Activated CD4-positive, alpha-beta memory T cell treated with anti-CD3 and anti-CD28 coated beads for 36 hours (primary cell): ENCODE measurements at regions of chr4 and their contacts with region 1.

Region 1: GRCh38 chr4:7761720-7762119 is 177.9 kb downstream of the AFAP1 start:
- DNase-seq: peak; percentile 66
- H3K4me3 Mint-ChIP-seq: no peak overlapping the region
- H3K27ac Mint-ChIP-seq: peak overlapping the region; percentile 69
- H3K4me1 Mint-ChIP-seq: peaks cover 30% of the 10 kb centered on the region
- H3K27me3 Mint-ChIP-seq: no peaks in the 10 kb centered on the region

Region 2: DNA sequence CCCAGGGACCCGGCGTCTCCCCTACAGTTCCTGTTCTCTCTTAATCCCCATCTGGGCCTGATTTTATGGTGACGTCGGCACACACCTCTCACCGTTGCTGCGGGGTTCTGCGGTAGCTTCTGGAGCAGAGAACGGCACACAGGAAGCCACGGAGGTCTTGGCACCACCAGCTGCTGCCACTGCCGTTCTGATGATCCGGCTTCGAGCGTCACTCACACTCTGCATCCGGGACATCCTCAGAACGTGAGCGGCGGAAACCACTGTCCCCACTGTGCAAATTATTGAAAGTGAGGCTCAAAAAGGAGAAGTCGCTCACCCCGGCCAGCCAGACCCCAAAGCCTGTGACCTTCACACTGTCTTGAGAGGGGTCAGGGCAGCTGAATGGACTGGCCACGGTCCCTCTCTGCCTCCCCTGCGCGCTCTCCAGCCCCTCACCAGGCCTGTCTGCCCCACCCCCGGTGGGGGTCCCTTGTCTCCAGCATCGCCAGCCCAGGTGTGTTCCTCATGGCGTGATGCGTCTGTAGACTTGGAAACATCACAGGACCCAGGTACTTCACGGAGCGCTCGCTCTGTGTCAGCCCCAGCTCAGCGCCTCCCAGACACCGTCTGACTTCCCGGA is 23.2 kb before region 1 on chr4:
- CTCF ChIA-PET with region 1: no interaction called
- POLR2A ChIA-PET with region 1: no interaction called
- intact Hi-C with region 1: no loop called
- DNase-seq: no peak
- H3K4me3 Mint-ChIP-seq: no peak overlapping the region
- H3K27ac Mint-ChIP-seq: no peak overlapping the region
- H3K4me1 Mint-ChIP-seq: no peaks in the 10 kb centered on the region
- H3K27me3 Mint-ChIP-seq: no peaks in the 10 kb centered on the region

Region 3: DNA sequence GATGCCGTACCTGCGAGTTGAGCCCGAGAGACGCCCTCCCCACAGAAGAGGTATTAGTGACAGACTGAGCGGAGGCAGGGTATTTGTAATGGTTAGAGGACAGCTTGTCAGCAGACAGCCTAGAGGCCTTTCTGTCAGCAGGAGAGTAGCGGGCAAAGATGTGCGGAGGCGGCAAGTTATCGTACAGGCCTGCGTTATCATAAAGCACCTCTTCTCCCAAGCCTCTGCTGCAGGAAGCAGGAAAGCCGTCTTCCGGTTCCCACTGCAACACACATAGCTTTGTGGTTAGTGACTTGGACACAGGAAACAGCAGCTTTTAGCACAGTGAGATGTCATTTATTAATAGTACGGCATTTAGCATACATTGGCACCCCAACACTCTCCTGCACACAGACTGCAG is 19.6 kb after region 1 on chr4:
- CTCF ChIA-PET with region 1: interaction called, 5 read pairs
- POLR2A ChIA-PET with region 1: no interaction called
- intact Hi-C with region 1: loop called (anchors 2 kb)
- DNase-seq: peak; percentile 57
- H3K4me3 Mint-ChIP-seq: peak overlapping the region; percentile 15
- H3K27ac Mint-ChIP-seq: peak overlapping the region; percentile 93
- H3K4me1 Mint-ChIP-seq: peaks cover 88% of the 10 kb centered on the region
- H3K27me3 Mint-ChIP-seq: no peaks in the 10 kb centered on the region

Region 4: GRCh38 chr4:7876201-7876875 is 114.6 kb after region 1 on chr4:
- CTCF ChIA-PET with region 1: no interaction called
- POLR2A ChIA-PET with region 1: no interaction called
- intact Hi-C with region 1: loop called (anchors 5 kb)
- DNase-seq: peak; percentile 65
- H3K4me3 Mint-ChIP-seq: peak overlapping the region; percentile 58
- H3K27ac Mint-ChIP-seq: peak overlapping the region; percentile 66
- H3K4me1 Mint-ChIP-seq: peaks cover 62% of the 10 kb centered on the region
- H3K27me3 Mint-ChIP-seq: no peaks in the 10 kb centered on the region

Region 5: DNA sequence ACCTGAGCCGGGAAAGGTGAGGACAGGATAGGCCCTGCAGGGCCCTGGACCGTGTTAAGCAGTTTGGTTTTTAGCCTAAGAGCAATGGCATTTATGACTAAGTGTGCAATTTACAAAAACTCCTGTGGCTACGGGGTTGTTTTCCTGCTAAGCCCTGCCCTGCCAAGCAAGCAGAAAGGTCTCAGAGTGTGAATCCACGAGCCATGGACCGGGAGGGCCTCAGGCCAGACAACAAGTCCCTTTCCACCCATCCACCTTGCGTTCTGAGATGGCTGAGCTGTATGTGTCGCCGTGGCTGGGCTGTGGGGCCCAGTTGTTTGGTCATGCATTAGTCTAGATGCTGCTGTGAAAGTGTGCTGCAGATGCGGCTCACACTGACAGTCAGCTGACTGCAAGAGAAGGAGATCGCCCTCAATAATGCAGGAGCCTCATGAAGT is 211.8 kb after region 1 on chr4:
- CTCF ChIA-PET with region 1: no interaction called
- POLR2A ChIA-PET with region 1: no interaction called
- intact Hi-C with region 1: loop called (anchors 5 kb)
- DNase-seq: peak; percentile 65
- H3K4me3 Mint-ChIP-seq: peak overlapping the region; percentile 98
- H3K27ac Mint-ChIP-seq: peak overlapping the region; percentile 100
- H3K4me1 Mint-ChIP-seq: peaks cover 47% of the 10 kb centered on the region
- H3K27me3 Mint-ChIP-seq: no peaks in the 10 kb centered on the region

Region 6: GRCh38 chr4:8468746-8469535 is 707.2 kb after region 1 on chr4:
- CTCF ChIA-PET with region 1: no interaction called
- POLR2A ChIA-PET with region 1: no interaction called
- intact Hi-C with region 1: no loop called
- DNase-seq: peak; percentile 70
- H3K4me3 Mint-ChIP-seq: no peak overlapping the region
- H3K27ac Mint-ChIP-seq: no peak overlapping the region
- H3K4me1 Mint-ChIP-seq: no peaks in the 10 kb centered on the region
- H3K27me3 Mint-ChIP-seq: no peaks in the 10 kb centered on the region